CD8-positive, alpha-beta memory T cell (primary cell): ENCODE measurements at regions of chr1 and their contacts with region 1.

Region 1: GRCh38 chr1:205977402-205978014 is 25.7 kb downstream of the RAB7B start:
- DNase-seq: peak; percentile 60 to 79 (median 63)
- H3K4me3 ChIP-seq: no peak overlapping the region
- H3K4me3 Mint-ChIP-seq: no peak overlapping the region
- H3K27ac ChIP-seq: no peak overlapping the region
- H3K27ac Mint-ChIP-seq: no peak overlapping the region
- H3K4me1 ChIP-seq: no peaks in the 10 kb centered on the region
- H3K4me1 Mint-ChIP-seq: no peaks in the 10 kb centered on the region
- H3K27me3 ChIP-seq: no peaks in the 10 kb centered on the region
- H3K27me3 Mint-ChIP-seq: peaks cover 1 to 3% of the 10 kb centered on the region in 2 donors

Region 2: DNA sequence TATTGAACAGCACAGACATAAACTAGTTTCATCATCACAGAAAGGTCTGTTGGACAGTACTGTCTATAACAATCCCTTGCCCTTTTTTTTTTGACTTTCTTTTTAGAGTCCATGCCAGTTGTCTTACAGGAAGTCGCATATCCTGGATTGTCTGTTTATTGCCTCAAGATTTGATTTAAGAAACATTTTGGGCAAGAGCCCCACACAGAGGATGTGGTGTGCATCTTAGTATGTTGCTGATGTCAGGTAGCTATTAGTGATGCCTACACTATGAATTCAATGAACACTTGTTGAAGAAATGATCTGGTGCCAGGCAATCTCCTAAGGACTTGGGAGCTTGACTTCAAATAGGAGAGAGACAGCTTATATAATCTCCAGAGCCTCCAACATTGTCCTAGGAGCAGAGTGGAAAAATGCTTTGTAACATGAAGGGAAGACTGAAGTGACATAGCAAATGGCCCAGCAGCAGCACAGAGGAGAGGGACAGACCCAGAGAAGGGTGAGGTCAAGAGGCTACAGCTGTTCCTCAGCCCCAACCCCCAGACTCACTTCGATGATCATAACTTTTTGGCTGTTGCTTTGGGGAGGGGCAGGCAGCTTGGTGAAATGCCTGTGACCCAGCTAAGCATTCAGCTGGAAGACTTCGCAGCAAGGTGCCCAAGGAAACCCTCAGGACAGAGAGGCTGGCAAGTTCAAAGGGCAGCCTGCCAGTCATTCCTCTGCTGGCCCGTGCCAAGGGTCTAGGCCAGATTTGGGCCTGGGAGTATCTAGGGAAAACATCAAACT is 194.7 kb before region 1 on chr1:
- CTCF ChIA-PET with region 1: interaction called, 133 read pairs
- POLR2A ChIA-PET with region 1: no interaction called
- DNase-seq: peak in 1 of 5 donors; percentile 29
- H3K4me3 ChIP-seq: no peak overlapping the region
- H3K4me3 Mint-ChIP-seq: no peak overlapping the region
- H3K27ac ChIP-seq: no peak overlapping the region
- H3K27ac Mint-ChIP-seq: peak overlapping the region in 4 of 8 donors; percentile 3 to 52 (median 10)
- H3K4me1 ChIP-seq: peaks cover 9% of the 10 kb centered on the region
- H3K4me1 Mint-ChIP-seq: peaks cover 12 to 14% (median 13%) of the 10 kb centered on the region in 3 donors
- H3K27me3 ChIP-seq: no peaks in the 10 kb centered on the region
- H3K27me3 Mint-ChIP-seq: no peaks in the 10 kb centered on the region

Region 3: GRCh38 chr1:205791568-205792180 is 185.8 kb before region 1 on chr1:
- CTCF ChIA-PET with region 1: interaction called, 133 read pairs
- POLR2A ChIA-PET with region 1: interaction called, 5 read pairs
- DNase-seq: peak; percentile 38 to 72 (median 41)
- H3K4me3 ChIP-seq: no peak overlapping the region
- H3K4me3 Mint-ChIP-seq: no peak overlapping the region
- H3K27ac ChIP-seq: no peak overlapping the region
- H3K27ac Mint-ChIP-seq: peak overlapping the region in 2 of 8 donors; percentile 58 to 70
- H3K4me1 ChIP-seq: no peaks in the 10 kb centered on the region
- H3K4me1 Mint-ChIP-seq: no peaks in the 10 kb centered on the region
- H3K27me3 ChIP-seq: no peaks in the 10 kb centered on the region
- H3K27me3 Mint-ChIP-seq: no peaks in the 10 kb centered on the region

Region 4: GRCh38 chr1:205805082-205805712 is 172.3 kb before region 1 on chr1:
- CTCF ChIA-PET with region 1: interaction called, 10 read pairs
- POLR2A ChIA-PET with region 1: no interaction called
- DNase-seq: peak in 1 of 5 donors; percentile 20
- H3K4me3 ChIP-seq: no peak overlapping the region
- H3K4me3 Mint-ChIP-seq: peak overlapping the region in 6 of 7 donors; percentile 60 to 72 (median 66)
- H3K27ac ChIP-seq: no peak overlapping the region
- H3K27ac Mint-ChIP-seq: peak overlapping the region; percentile 44 to 90 (median 78)
- H3K4me1 ChIP-seq: peaks cover 51% of the 10 kb centered on the region
- H3K4me1 Mint-ChIP-seq: peaks cover 64 to 77% (median 66%) of the 10 kb centered on the region in 3 donors
- H3K27me3 ChIP-seq: no peaks in the 10 kb centered on the region
- H3K27me3 Mint-ChIP-seq: no peaks in the 10 kb centered on the region

Region 5: GRCh38 chr1:205919026-205919746 is 58.3 kb before region 1 on chr1:
- CTCF ChIA-PET with region 1: interaction called, 18 read pairs
- POLR2A ChIA-PET with region 1: no interaction called
- DNase-seq: peak; percentile 22 to 69 (median 46)
- H3K4me3 ChIP-seq: no peak overlapping the region
- H3K4me3 Mint-ChIP-seq: no peak overlapping the region
- H3K27ac ChIP-seq: no peak overlapping the region
- H3K27ac Mint-ChIP-seq: no peak overlapping the region
- H3K4me1 ChIP-seq: no peaks in the 10 kb centered on the region
- H3K4me1 Mint-ChIP-seq: no peaks in the 10 kb centered on the region
- H3K27me3 ChIP-seq: no peaks in the 10 kb centered on the region
- H3K27me3 Mint-ChIP-seq: peaks cover 5 to 21% of the 10 kb centered on the region in 2 donors

Region 6: GRCh38 chr1:206006946-206007345 is 29.4 kb after region 1 on chr1:
- CTCF ChIA-PET with region 1: no interaction called
- POLR2A ChIA-PET with region 1: no interaction called
- DNase-seq: no peak
- H3K4me3 ChIP-seq: no peak overlapping the region
- H3K4me3 Mint-ChIP-seq: no peak overlapping the region
- H3K27ac ChIP-seq: no peak overlapping the region
- H3K27ac Mint-ChIP-seq: no peak overlapping the region
- H3K4me1 ChIP-seq: no peaks in the 10 kb centered on the region
- H3K4me1 Mint-ChIP-seq: peaks cover 2 to 4% (median 3%) of the 10 kb centered on the region in 3 donors
- H3K27me3 ChIP-seq: no peaks in the 10 kb centered on the region
- H3K27me3 Mint-ChIP-seq: peaks cover 9 to 18% of the 10 kb centered on the region in 2 donors